Activated CD4-positive, alpha-beta T cell treated with anti-CD3 and anti-CD28 coated beads for 36 hours (primary cell): ENCODE measurements at regions of chr2 and their contacts with region 1.

Region 1: DNA sequence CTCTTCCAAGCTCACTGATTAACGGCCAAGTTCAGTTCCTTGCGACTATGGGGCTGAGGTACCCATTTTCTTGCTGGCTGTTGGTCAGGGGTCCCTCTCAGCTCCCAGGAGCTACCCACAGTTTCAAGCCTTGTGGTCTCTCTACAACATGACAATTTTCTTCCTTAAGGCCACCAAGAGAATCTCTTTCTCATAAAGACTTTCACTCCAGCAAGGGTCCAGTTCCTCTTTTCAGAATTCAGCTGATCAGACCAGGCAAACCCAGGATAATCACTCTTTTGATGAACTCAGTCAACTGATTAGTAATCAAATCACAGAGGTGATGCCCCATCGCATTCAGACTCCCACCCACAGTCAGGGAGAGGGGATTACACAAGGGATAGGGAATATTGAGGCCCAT is 129.7 kb downstream of the IRS1 start:
- DNase-seq: no peak
- ATAC-seq: no peak
- H3K4me3 Mint-ChIP-seq: no peak overlapping the region
- H3K27ac Mint-ChIP-seq: no peak overlapping the region
- H3K4me1 Mint-ChIP-seq: peaks cover 6% of the 10 kb centered on the region
- H3K27me3 Mint-ChIP-seq: peaks cover 11% of the 10 kb centered on the region

Region 2: GRCh38 chr2:226600184-226600583 is 69.7 kb before region 1 on chr2:
- CTCF ChIA-PET with region 1: no interaction called
- POLR2A ChIA-PET with region 1: no interaction called
- intact Hi-C with region 1: no loop called
- DNase-seq: no peak
- ATAC-seq: no peak
- H3K4me3 Mint-ChIP-seq: no peak overlapping the region
- H3K27ac Mint-ChIP-seq: no peak overlapping the region
- H3K4me1 Mint-ChIP-seq: no peaks in the 10 kb centered on the region
- H3K27me3 Mint-ChIP-seq: peaks cover 21% of the 10 kb centered on the region

Region 3: GRCh38 chr2:226716126-226716525 is 46.2 kb after region 1 on chr2:
- CTCF ChIA-PET with region 1: no interaction called
- POLR2A ChIA-PET with region 1: no interaction called
- intact Hi-C with region 1: loop called in 1 of 2 experiments (anchors 1 kb)
- DNase-seq: no peak
- ATAC-seq: peak; percentile 42
- H3K4me3 Mint-ChIP-seq: no peak overlapping the region
- H3K27ac Mint-ChIP-seq: no peak overlapping the region
- H3K4me1 Mint-ChIP-seq: no peaks in the 10 kb centered on the region
- H3K27me3 Mint-ChIP-seq: peaks cover 11% of the 10 kb centered on the region